Activated CD4-positive, alpha-beta T cell treated with anti-CD3 and anti-CD28 coated beads, Interleukin-2, amount 10 ng/mL, durations not matched to agents 7 days and 5 days (primary cell): ENCODE measurements at regions of chr15 and their contacts with region 1.

Region 1: GRCh38 chr15:41557673-41558399 is 1.2 kb upstream of the TYRO3 start:
- DNase-seq: peak; percentile 74
- H3K4me3 Mint-ChIP-seq: peak overlapping the region; percentile 81
- H3K27ac Mint-ChIP-seq: peak overlapping the region; percentile 89
- H3K4me1 Mint-ChIP-seq: peaks cover 38% of the 10 kb centered on the region
- H3K27me3 Mint-ChIP-seq: peaks cover 33% of the 10 kb centered on the region

Region 2: DNA sequence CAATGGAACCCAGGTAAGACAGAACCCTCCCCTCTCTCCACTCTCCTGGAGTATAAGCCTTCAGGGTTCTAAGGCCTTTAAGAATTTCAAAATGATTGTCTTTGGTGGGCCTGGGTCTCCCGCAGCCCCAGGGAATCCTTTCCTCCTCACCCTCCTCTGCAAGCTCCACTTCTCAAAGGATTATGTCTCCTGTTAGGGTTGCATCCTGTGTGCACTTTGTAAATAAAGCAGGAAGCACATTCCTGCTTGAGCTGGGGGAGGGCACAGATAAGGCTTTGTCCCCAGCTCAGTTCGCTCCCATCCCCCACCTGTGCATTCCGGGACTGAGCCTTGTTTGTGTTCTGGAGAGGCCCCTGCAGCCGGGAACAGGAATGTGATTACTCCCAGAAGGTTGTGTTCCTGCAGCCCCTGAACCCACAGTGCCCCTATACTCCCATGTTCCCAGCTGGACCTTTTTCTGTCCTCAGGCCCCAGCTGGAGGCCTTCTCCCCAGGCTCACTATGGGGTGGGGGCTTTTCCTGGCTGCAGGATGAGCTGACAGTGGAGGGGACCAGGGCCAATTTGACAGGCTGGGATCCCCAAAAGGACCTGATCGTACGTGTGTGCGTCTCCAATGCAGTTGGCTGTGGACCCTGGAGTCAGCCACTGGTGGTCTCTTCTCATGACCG is 10.6 kb after region 1 on chr15:
- CTCF ChIA-PET with region 1: interaction called, 11 read pairs
- POLR2A ChIA-PET with region 1: no interaction called
- DNase-seq: no peak
- H3K4me3 Mint-ChIP-seq: no peak overlapping the region
- H3K27ac Mint-ChIP-seq: no peak overlapping the region
- H3K4me1 Mint-ChIP-seq: no peaks in the 10 kb centered on the region
- H3K27me3 Mint-ChIP-seq: peaks cover 1% of the 10 kb centered on the region

Region 3: DNA sequence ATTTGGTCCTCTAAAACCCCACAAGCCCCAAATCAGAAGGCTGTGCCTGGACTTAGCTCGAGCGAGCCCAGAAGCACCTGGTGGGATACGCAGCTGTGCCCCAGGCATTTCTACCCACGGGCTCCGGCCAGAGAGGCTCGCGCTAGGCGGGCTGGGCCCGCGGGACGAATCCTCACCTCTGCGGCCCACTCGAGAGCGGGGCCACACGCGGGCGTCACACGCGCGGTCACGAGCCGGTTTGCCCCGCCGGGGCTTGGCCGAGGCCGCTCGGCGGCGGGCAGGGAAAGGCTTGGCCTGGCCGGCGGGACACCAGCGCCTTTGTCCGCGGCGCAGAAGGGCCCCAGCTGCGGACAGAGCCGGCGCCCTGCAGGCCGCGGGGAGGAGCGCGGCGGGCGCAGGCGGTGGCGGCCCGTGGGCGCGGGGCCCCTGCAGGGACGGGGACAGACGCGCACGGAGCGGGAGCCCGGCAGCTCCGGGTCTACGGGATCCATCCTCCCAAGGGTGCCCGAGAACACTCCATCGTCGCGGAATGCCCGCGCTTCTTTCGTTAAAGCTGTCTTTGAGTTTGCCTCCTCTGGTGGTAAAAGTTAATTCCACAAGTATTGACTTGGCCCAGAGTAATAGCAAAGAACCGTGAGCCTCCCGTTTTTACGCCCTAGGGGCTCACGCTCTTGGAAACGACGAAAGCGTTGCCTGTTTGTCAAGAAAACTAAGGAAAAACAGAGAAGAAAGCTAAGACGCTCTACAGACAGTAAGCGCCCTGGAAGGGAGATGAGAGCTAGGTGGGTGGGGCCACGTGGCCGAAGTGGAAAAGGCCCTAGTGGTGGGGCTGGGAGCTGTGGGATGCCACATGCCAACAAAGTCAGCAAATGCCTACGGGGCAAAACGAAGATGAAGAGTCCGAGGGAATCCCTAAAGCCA is 27.6 kb after region 1 on chr15:
- CTCF ChIA-PET with region 1: interaction called, 10 read pairs
- POLR2A ChIA-PET with region 1: no interaction called
- DNase-seq: peak; percentile 16
- H3K4me3 Mint-ChIP-seq: peak overlapping the region; percentile 56
- H3K27ac Mint-ChIP-seq: no peak overlapping the region
- H3K4me1 Mint-ChIP-seq: peaks cover 8% of the 10 kb centered on the region
- H3K27me3 Mint-ChIP-seq: peaks cover 57% of the 10 kb centered on the region